Mammary epithelial cell (primary cell): ENCODE measurements at regions of chr5 and their contacts with region 1.

Region 1: GRCh38 chr5:94968507-94969095 is 316.3 kb downstream of the MCTP1 start:
- DNase-seq: peak; percentile 53
- H3K4me3 ChIP-seq: no peak overlapping the region
- H3K27ac ChIP-seq: no peak overlapping the region
- H3K4me1 ChIP-seq: no peaks in the 10 kb centered on the region
- H3K27me3 ChIP-seq: no peaks in the 10 kb centered on the region
- CTCF ChIP-seq: peak; percentile 64 to 68

Region 2: GRCh38 chr5:95081500-95081960 is 112.9 kb after region 1 on chr5:
- CTCF ChIA-PET with region 1: no interaction called
- dilution Hi-C with region 1: no loop called
- in situ Hi-C with region 1: no loop called
- intact Hi-C with region 1: loop called (anchors 5 kb)
- DNase-seq: peak; percentile 89
- H3K4me3 ChIP-seq: peak overlapping the region; percentile 59 to 93 (median 86)
- H3K27ac ChIP-seq: peak overlapping the region; percentile 80
- H3K4me1 ChIP-seq: no peaks in the 10 kb centered on the region
- H3K27me3 ChIP-seq: no peaks in the 10 kb centered on the region
- CTCF ChIP-seq: no peak

Region 3: DNA sequence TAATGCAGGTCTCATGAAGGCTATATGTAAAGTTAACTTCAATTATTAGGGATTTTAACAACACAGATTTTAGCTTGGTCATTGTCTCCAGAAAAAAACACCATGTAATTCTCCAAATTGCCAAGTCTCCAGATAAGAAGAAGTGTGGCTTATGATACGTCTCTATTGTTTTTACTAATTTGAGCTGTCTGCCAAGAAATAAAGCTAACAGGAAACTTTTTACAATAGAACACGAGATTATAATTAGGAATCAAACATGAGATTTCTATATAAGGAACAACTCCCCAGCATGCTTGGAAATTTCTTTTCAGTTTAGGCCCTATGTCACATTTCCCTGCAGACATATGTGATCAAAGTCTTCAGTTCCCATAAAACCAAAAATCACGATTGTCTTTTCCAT is 173.5 kb after region 1 on chr5:
- CTCF ChIA-PET with region 1: no interaction called
- dilution Hi-C with region 1: no loop called
- in situ Hi-C with region 1: no loop called
- intact Hi-C with region 1: no loop called
- DNase-seq: no peak
- H3K4me3 ChIP-seq: no peak overlapping the region
- H3K27ac ChIP-seq: no peak overlapping the region
- H3K4me1 ChIP-seq: no peaks in the 10 kb centered on the region
- H3K27me3 ChIP-seq: peaks cover 11% of the 10 kb centered on the region
- CTCF ChIP-seq: no peak

Region 4: DNA sequence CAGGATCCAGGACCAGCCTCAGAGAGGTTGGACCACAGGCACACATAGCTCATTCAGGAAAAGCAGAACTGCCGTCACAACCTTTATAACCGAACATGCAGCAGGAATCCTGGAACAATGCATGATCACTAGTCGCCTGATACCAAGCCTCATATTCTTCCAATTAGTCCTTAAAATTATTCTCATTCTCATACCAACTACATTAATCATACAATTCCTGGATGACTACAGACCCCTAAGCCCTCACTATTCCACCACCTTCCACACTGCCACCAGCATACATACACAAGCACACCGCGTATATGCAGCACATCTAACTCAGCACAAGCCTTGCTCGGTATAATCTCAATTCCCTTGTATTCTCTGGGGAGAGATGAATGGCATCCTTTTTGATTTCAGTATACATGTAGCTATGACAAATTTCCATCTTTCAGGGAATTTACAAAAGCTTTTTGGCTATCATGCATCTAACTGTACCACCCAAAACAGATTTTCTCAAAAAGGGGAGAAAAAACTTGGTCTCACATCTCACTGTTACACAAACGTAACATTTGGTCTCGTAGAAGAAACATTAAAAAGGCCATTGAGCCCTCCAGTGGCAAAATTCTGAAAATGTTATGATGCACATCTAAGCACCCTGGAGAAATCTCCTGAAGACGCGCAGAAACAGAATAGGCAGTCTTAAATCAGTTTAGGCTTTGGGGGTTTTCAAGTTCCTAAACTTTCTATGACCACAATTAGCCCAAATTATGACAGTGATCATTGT is 270.1 kb after region 1 on chr5:
- CTCF ChIA-PET with region 1: no interaction called
- dilution Hi-C with region 1: no loop called
- in situ Hi-C with region 1: loop called in 1 of 2 experiments (anchors 10 kb)
- intact Hi-C with region 1: loop called (anchors 1 kb)
- DNase-seq: peak; percentile 7
- H3K4me3 ChIP-seq: no peak overlapping the region
- H3K27ac ChIP-seq: no peak overlapping the region
- H3K4me1 ChIP-seq: no peaks in the 10 kb centered on the region
- H3K27me3 ChIP-seq: peaks cover 5% of the 10 kb centered on the region
- CTCF ChIP-seq: peak in 1 of 2 donors; percentile 49

Region 5: GRCh38 chr5:95261437-95262175 is 293.0 kb after region 1 on chr5:
- CTCF ChIA-PET with region 1: no interaction called
- dilution Hi-C with region 1: no loop called
- in situ Hi-C with region 1: no loop called
- intact Hi-C with region 1: loop called (anchors 1 kb)
- DNase-seq: peak; percentile 9
- H3K4me3 ChIP-seq: no peak overlapping the region
- H3K27ac ChIP-seq: no peak overlapping the region
- H3K4me1 ChIP-seq: no peaks in the 10 kb centered on the region
- H3K27me3 ChIP-seq: peaks cover 4% of the 10 kb centered on the region
- CTCF ChIP-seq: peak; percentile 33 to 52

Region 6: DNA sequence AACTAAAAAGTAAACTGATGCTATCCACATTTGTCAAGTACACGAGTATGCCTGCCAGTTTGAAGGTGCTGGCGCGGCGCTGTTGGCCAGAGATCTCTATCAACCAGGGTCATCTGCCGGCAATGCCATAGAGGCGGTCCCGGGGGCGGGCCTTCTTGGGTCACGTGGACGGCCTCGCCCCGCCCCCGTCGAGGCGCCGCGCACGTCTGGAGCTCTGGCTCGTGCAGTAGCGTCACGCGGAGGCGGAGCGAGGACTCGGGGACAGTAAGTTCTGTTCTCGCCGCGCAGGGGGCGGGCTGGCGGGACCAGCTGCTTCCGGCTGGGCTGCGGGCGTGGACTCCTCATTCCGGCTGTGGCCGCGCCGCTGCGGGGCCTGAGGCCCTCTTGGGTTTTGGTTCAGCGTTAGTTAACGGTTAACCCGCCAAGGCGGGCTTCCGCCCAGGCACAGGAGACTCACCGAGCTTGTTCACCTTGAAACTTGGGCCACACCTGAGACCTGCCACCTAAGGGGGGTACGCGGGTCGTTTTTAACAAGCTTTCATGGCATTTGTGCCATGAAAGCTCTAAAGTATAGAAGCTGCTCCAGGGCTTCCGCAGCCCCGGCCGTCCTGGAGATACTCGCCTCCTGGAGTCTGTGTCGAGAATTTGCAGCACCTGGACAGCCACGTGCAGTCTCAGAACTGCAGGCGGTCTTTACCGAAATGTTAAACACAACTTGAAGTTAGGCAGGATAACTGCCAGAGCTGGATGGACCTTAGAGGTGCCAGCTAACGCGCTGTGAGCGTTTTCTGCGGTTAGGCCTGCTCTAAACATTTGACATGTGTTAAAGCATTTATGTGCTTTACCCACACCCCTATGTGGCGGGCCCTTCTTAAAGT is 678.2 kb after region 1 on chr5 and contains the start of gene RFESD:
- CTCF ChIA-PET with region 1: no interaction called
- dilution Hi-C with region 1: no loop called
- in situ Hi-C with region 1: no loop called
- intact Hi-C with region 1: loop called (anchors 10 kb)
- DNase-seq: peak; percentile 91
- H3K4me3 ChIP-seq: peak within 1 kb of the TSS; percentile 37 to 59 (median 51)
- H3K27ac ChIP-seq: peak within 1 kb of the TSS; percentile 84
- H3K4me1 ChIP-seq: no peaks in the 10 kb centered on the region
- H3K27me3 ChIP-seq: no peaks in the 10 kb centered on the region
- CTCF ChIP-seq: peak in 1 of 2 donors; percentile 29
- total RNA-seq, gene RFESD: 2.1 to 3.0 TPM